ENCODE measurements at regions of chr10 and their contacts with region 1.

Region 1: GRCh38 chr10:60778214-60779029 is at the start of gene CDK1:
- DNase-seq: peak; percentile 98
- H3K4me3 ChIP-seq: peak within 1 kb of the TSS; percentile 81
- H3K27ac ChIP-seq: peak within 1 kb of the TSS; percentile 30
- H3K4me1 ChIP-seq: no peaks in the 10 kb centered on the region
- H3K27me3 ChIP-seq: no peaks in the 10 kb centered on the region
- CTCF ChIP-seq: no peak
- total RNA-seq, gene CDK1: 16.5 to 53.8 TPM

Region 2: DNA sequence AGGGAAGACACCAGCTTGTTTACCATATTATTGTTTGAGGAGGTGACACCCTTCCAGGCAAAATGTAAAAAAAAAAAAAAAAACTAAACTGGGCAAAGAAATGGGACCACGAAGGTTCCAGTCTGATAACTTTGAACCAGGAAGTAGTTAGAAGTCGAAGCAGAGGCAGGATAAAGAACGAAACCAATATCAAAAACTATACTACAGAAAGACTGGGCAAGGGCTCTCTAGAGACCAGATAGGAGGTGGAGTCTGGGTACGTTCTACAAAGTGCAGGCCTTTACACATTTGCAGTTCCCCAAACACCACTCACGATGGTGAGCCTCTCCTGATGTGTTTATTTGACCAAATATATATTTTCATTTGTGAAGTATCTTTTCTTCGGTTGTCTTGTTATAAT is 125.8 kb before region 1 on chr10:
- intact Hi-C with region 1: loop called (anchors 10 kb)
- DNase-seq: no peak
- H3K4me3 ChIP-seq: no peak overlapping the region
- H3K27ac ChIP-seq: no peak overlapping the region
- H3K4me1 ChIP-seq: no peaks in the 10 kb centered on the region
- H3K27me3 ChIP-seq: no peaks in the 10 kb centered on the region
- CTCF ChIP-seq: no peak

Region 3: GRCh38 chr10:60914690-60915141 is 136.3 kb after region 1 on chr10:
- intact Hi-C with region 1: no loop called
- DNase-seq: no peak
- H3K4me3 ChIP-seq: no peak overlapping the region
- H3K27ac ChIP-seq: no peak overlapping the region
- H3K4me1 ChIP-seq: no peaks in the 10 kb centered on the region
- H3K27me3 ChIP-seq: no peaks in the 10 kb centered on the region
- CTCF ChIP-seq: no peak

Region 4: GRCh38 chr10:61397175-61397986 is 619.0 kb after region 1 on chr10:
- intact Hi-C with region 1: no loop called
- DNase-seq: no peak
- H3K4me3 ChIP-seq: peak overlapping the region; percentile 1
- H3K27ac ChIP-seq: no peak overlapping the region
- H3K4me1 ChIP-seq: no peaks in the 10 kb centered on the region
- H3K27me3 ChIP-seq: no peaks in the 10 kb centered on the region
- CTCF ChIP-seq: no peak